Dorsolateral prefrontal cortex (tissue), 120 donors: ENCODE measurements at regions of chr10 and their contacts with region 1.

Region 1: GRCh38 chr10:29392376-29393021 is 103.6 kb downstream of the LYZL1 start:
- DNase-seq: peak in 1 of 10 donors; percentile 32
- H3K4me3 ChIP-seq: no peak overlapping the region
- H3K27ac ChIP-seq: no peak overlapping the region
- H3K27me3 ChIP-seq: peaks cover 0 to 5% (median 0%) of the 10 kb centered on the region in 45 donors
- CTCF ChIP-seq: peak in 54 of 56 donors; percentile 30 to 78 (median 64)

Region 2: DNA sequence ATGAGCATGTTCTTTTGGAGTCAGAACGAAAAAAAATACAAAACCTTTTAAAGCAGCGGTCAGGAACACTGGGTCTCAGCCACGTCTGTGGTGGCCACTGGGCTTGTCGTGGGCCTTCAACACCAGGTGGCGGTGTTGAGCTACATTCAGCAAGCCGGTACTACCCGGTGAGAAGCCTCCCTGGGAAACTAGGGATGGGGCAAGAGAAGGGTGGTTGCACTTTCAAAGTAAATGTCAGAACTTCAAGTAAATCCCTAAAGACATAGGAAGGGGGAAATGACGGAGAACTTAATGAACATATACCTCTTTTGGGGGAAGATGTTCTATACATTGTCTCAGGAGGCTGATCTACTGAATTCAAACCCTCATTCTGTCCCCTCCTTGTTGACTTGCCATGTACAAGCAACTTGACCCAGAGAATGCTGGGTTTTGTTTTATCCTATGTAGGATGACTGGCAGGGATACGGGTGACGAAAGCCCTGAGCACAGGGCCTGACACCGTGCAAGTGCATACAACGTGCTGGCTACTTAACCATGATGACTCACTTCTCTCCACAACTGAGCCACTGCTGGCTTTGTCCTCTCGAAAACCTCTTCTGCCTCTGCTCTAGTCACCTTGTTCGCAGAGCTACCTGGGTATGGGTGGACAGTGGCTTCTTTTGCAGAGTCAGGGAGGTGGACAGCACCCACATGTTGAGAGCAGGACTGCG is 764.2 kb before region 1 on chr10:
- intact Hi-C with region 1: loop called in 1 of 2 experiments (anchors 10 kb)
- DNase-seq: peak; percentile 66 to 86 (median 80)
- H3K4me3 ChIP-seq: peak overlapping the region in 3 of 59 donors; percentile 10 to 19 (median 19)
- H3K27ac ChIP-seq: no peak overlapping the region
- H3K27me3 ChIP-seq: peaks cover 0 to 14% (median 0%) of the 10 kb centered on the region in 45 donors
- CTCF ChIP-seq: peak; percentile 75 to 96 (median 92)

Region 3: DNA sequence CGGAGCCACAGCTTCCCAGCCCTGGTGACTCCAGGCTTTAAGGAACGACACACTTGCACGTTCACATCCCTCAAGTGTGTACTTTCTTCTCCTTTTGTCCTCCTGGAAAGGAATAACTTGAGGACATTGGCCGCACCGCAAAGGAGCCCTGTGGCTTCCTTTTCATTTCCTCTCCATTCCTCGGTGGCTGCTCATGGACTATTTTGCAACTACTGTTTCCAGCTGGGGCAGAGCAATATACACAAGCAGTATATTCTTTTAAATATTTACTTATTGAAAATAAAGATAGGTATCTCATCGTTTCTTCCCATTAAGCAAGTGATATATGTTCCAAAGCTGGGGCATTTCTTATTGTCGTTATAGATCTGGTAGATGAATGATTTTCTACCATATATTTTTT is 200.8 kb before region 1 on chr10:
- intact Hi-C with region 1: no loop called
- DNase-seq: no peak
- H3K4me3 ChIP-seq: no peak overlapping the region
- H3K27ac ChIP-seq: no peak overlapping the region
- H3K27me3 ChIP-seq: peaks cover 0 to 30% (median 2%) of the 10 kb centered on the region in 45 donors
- CTCF ChIP-seq: no peak

Region 4: GRCh38 chr10:29446327-29446726 is 53.8 kb after region 1 on chr10:
- intact Hi-C with region 1: loop called in 1 of 2 experiments (anchors 5 kb)
- DNase-seq: no peak
- H3K4me3 ChIP-seq: no peak overlapping the region
- H3K27ac ChIP-seq: no peak overlapping the region
- H3K27me3 ChIP-seq: no peaks in the 10 kb centered on the region
- CTCF ChIP-seq: no peak